Calu3 (cell line): ENCODE measurements at regions of chr9 and their contacts with region 1.

Region 1: DNA sequence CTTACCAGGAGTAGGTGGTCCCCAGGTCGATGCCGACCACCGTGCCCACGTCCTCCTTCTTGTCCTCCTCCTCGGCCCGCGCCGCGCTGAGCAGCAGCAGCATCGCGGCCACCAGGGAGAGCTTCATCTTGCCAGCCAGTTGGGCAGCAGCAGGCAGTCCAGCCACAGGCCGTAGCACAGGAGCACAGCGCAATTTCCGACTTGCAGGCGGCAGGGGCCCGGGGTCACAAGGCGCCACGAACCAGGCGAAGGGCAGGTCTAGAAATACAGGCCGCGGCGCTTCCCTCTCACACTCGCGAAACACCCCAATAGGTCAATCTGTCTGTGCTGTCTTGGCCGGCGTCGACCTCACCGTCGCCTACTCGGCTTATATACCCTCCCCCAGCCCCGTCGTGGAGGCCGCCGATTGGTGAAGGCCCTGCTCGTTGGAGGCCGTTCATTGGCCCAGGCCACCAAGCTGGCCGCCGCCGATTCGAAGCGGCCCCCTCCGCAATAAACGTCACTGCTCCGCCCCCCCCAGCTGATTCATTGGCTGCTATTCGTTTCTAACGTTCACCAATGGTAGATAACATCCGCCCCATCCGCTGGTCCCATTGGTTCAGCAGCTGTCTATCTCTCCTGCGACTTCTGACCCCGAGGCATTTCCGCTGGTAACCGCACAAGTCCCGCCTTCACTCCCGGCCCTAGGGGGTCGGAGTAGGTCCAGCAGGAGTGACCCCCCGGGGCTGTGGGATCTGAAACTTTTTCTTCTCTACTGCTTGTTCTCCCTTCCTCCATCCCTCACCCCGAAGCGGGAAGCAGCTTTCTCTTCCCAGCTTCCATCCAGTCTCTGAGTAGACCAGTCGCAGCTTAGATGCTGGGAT is at the start of gene HSPA5:
- DNase-seq: peak; percentile 96
- H3K4me3 Mint-ChIP-seq: peak within 1 kb of the TSS; percentile 85
- H3K27ac Mint-ChIP-seq: peak within 1 kb of the TSS; percentile 99
- H3K4me1 Mint-ChIP-seq: peaks cover 16% of the 10 kb centered on the region
- H3K27me3 Mint-ChIP-seq: peaks cover 10% of the 10 kb centered on the region
- CTCF ChIP-seq: no peak
- total RNA-seq, gene HSPA5: 256 and 259 TPM in 2 replicates

Region 2: DNA sequence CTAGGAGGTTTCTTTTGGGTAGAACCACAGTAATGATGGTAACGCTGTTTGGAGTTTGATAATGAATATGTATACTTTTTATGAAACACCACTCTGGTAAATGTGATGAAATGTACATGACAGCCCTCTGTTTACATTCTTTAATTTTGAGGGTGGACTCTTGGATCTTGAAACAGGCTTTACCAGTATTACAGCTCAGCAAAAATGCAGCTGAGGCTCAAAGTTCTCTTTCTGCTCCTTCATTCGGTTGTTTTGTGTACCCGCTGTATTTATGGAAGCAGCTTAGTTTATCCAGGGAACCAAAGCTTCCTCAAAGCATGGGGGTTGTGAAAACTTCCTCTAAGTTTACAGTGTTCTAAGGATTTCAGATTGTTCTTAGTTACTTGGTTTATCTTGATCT is 31.5 kb after region 1 on chr9:
- CTCF ChIA-PET with region 1: no interaction called
- intact Hi-C with region 1: loop called (anchors 1 kb)
- DNase-seq: peak; percentile 15
- H3K4me3 Mint-ChIP-seq: peak overlapping the region; percentile 34
- H3K27ac Mint-ChIP-seq: peak overlapping the region; percentile 83
- H3K4me1 Mint-ChIP-seq: peaks cover 11% of the 10 kb centered on the region
- H3K27me3 Mint-ChIP-seq: no peaks in the 10 kb centered on the region
- CTCF ChIP-seq: no peak

Region 3: DNA sequence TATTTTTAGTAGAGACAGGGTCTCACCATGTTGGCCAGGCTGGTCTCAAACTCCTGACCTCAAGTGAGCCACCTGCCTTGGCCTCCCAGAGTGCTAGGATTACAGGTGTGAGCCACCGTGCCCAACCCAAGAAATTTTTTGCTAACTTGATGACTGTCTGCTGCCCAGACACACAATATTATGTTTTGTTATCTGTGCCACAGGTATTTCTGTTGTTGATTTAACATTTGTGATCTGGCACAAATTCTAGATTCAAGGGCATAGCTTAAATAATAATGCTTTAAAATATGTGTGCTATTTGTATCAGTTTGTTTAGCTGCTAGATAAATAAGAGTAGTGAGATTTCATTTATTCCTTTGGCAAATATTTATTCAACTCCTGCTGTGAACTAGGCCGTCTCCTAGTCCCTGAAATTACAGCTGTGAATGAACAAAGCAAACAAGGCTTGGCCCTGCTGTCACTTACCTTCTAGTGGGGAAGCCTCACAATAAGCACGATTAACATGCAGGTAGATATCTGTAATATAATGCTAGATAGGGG is 55.7 kb after region 1 on chr9:
- CTCF ChIA-PET with region 1: interaction called, 3 read pairs
- intact Hi-C with region 1: loop called (anchors 1 kb)
- DNase-seq: peak; percentile 53
- H3K4me3 Mint-ChIP-seq: no peak overlapping the region
- H3K27ac Mint-ChIP-seq: peak overlapping the region; percentile 76
- H3K4me1 Mint-ChIP-seq: peaks cover 12% of the 10 kb centered on the region
- H3K27me3 Mint-ChIP-seq: no peaks in the 10 kb centered on the region
- CTCF ChIP-seq: no peak